ENCODE measurements at regions of chr14 and their contacts with region 1.

Region 1: DNA sequence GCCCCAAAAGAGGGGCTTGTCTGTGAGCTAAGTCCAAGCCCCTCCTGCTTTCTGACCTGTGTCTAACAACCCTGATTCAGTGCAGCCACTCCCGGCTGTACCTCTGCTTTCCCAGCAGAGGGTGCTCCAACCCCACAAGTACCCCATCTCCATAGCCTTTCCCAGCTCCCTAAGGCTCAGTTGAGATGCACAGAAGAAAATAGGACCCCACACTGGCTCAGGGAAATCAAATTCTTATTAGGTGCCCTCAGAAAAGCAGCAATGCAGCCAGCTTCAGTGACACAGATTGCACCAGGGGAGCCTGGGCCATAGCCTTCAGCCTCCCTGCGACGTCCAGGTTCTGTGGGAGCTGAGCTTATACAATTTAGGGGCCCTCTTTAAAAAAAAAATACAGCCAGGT is 49.9 kb downstream of the LRRC74A start:
- DNase-seq: peak; percentile 61
- H3K4me3 Mint-ChIP-seq: no peak overlapping the region
- H3K27ac Mint-ChIP-seq: no peak overlapping the region
- H3K4me1 Mint-ChIP-seq: peaks cover 2% of the 10 kb centered on the region
- H3K27me3 Mint-ChIP-seq: no peaks in the 10 kb centered on the region

Region 2: GRCh38 chr14:76710056-76711010 is 165.7 kb before region 1 on chr14:
- CTCF ChIA-PET with region 1: interaction called, 13 read pairs
- POLR2A ChIA-PET with region 1: no interaction called
- intact Hi-C with region 1: loop called (anchors 1 kb)
- DNase-seq: peak; percentile 20
- H3K4me3 Mint-ChIP-seq: no peak overlapping the region
- H3K27ac Mint-ChIP-seq: no peak overlapping the region
- H3K4me1 Mint-ChIP-seq: no peaks in the 10 kb centered on the region
- H3K27me3 Mint-ChIP-seq: peaks cover 16% of the 10 kb centered on the region

Region 3: GRCh38 chr14:76910371-76910890 is 34.4 kb after region 1 on chr14:
- CTCF ChIA-PET with region 1: interaction called, 80 read pairs
- POLR2A ChIA-PET with region 1: no interaction called
- intact Hi-C with region 1: loop called (anchors 2 kb)
- DNase-seq: no peak
- H3K4me3 Mint-ChIP-seq: no peak overlapping the region
- H3K27ac Mint-ChIP-seq: no peak overlapping the region
- H3K4me1 Mint-ChIP-seq: peaks cover 19% of the 10 kb centered on the region
- H3K27me3 Mint-ChIP-seq: no peaks in the 10 kb centered on the region

Region 4: GRCh38 chr14:77059276-77059915 is 183.3 kb after region 1 on chr14:
- CTCF ChIA-PET with region 1: interaction called, 94 read pairs
- POLR2A ChIA-PET with region 1: no interaction called
- intact Hi-C with region 1: loop called (anchors 5 kb)
- DNase-seq: peak; percentile 69
- H3K4me3 Mint-ChIP-seq: no peak overlapping the region
- H3K27ac Mint-ChIP-seq: no peak overlapping the region
- H3K4me1 Mint-ChIP-seq: peaks cover 15% of the 10 kb centered on the region
- H3K27me3 Mint-ChIP-seq: no peaks in the 10 kb centered on the region

Region 5: DNA sequence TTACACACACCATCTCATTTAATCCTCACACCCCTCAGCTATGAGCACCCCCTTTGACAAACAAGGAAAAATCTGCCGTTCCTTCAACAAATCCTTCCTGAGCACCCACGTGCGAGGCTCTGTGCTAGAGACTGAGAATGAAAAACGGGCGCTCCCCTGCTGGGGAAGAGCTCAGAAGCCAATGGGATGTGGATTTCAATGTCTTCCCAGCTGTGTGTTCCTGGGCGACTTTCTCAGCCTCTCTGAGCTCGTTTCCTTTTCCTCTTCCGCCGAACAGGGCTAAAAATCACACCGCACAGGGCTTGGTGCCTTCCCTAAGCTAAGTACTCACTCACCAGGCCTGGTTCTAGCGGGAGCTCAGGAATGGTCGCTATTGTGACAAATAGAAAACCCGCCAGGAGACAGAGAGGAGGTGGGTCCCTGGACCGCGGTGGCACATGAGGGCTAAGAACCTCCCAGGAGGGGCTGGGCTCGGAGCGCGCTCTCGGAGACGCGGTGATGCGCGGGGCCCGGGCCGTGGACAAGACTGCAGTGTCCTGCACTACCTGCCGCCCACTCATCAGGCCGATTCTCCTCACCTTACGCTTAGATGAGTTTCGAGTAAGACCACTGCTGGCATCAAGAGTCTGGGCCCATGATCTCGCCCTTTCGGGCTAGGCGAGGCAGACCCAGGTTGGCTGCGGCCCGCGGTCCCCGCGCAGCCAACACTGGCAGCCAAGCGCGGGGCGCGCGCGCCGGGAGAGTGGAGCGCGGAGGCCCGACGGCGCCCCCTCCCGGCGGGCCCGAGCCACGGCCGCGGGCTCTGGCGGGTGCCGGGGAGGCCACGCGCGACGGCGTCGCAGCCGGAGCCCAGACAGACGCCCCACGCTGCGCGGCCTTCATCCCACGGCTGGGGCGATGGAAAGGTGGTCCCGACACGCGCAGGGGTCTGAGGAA is 248.5 kb after region 1 on chr14:
- CTCF ChIA-PET with region 1: interaction called, 11 read pairs
- POLR2A ChIA-PET with region 1: interaction called, 4 read pairs
- intact Hi-C with region 1: no loop called
- DNase-seq: peak; percentile 77
- H3K4me3 Mint-ChIP-seq: peak overlapping the region; percentile 82
- H3K27ac Mint-ChIP-seq: peak overlapping the region; percentile 73
- H3K4me1 Mint-ChIP-seq: peaks cover 50% of the 10 kb centered on the region
- H3K27me3 Mint-ChIP-seq: peaks cover 2% of the 10 kb centered on the region

Measured in activated CD4-positive, alpha-beta memory T cell treated with anti-CD3 and anti-CD28 coated beads for 36 hours (primary cell).